Breast epithelium (tissue), 4 donors: ENCODE measurements at regions of chr6 and their contacts with region 1.

Region 1: DNA sequence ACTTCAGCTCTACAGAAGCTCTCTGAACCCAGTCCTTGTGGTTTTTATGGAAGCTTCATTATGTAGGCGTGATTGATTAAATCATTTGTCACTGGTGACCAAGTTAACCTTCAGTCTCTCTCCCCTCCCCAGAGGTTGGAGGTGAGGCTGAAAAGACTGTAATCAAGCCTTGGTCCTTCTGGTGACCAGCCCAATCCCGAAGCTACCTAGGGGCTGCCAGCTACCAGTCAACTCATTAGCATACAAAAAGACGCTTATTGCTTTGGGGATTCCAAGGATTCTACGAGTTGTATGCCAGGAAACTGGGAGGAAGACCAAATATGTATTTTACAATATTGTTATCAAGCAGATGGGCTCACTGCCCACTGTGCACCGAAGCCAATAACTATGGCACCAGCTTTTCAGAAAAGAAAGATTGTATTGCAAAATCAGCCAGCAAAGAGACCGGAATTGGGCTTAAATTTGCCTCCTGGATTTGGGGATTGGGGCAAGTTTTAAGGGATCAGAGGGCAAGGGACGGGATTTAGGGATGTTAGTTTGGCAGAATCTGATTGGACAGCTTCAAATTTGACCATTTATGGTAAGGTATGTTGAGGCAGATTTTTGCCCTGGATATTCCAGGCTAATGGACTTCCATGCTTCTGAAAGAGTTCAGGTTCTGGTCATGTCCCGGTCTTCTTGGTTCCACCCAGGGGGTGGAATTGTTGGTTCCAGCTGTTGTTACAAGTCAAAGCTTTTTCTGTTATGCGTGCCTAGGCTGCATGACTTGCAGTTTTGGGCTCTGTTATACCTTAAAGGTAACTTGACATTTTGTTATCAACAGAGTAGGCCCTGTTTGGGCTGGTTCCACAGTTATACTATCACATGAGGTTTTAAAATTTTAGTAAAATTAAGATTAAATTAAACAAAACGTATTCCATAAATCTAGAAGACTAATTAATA is 167.4 kb downstream of the COL9A1 start:
- DNase-seq: no peak
- H3K4me3 ChIP-seq: no peak overlapping the region
- H3K27ac ChIP-seq: no peak overlapping the region
- H3K4me1 ChIP-seq: no peaks in the 10 kb centered on the region
- H3K27me3 ChIP-seq: no peaks in the 10 kb centered on the region
- CTCF ChIP-seq: no peak
- POLR2A ChIP-seq: no peak

Region 2: GRCh38 chr6:70210462-70210861 is 75.0 kb after region 1 on chr6:
- intact Hi-C with region 1: no loop called
- DNase-seq: no peak
- H3K4me3 ChIP-seq: no peak overlapping the region
- H3K27ac ChIP-seq: no peak overlapping the region
- H3K4me1 ChIP-seq: no peaks in the 10 kb centered on the region
- H3K27me3 ChIP-seq: no peaks in the 10 kb centered on the region
- CTCF ChIP-seq: peak in 1 of 3 donors; percentile 9
- POLR2A ChIP-seq: no peak

Region 3: DNA sequence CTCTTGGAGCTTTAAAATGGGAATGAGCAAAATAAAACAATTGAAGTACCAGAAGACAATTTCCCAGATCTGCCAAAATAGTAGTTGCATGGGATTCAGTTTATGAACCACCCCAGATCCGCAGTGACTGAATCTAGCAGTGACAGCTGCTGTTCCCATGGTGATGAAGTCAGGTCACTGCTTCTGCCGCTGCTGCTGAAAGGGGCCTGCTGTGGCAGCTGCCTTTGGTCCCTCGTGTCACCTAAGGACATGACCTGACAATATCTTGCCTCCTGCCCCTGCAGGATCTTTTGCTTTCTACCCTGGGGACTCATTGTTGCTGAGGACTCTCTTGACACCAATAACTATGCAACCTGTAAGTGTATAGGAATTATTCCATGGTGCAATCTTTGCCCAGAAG is 1118.8 kb after region 1 on chr6:
- intact Hi-C with region 1: no loop called
- DNase-seq: no peak
- H3K4me3 ChIP-seq: no peak overlapping the region
- H3K27ac ChIP-seq: no peak overlapping the region
- H3K4me1 ChIP-seq: peaks cover 5 to 7% of the 10 kb centered on the region in 2 donors
- H3K27me3 ChIP-seq: no peaks in the 10 kb centered on the region
- CTCF ChIP-seq: no peak
- POLR2A ChIP-seq: no peak

Region 4: DNA sequence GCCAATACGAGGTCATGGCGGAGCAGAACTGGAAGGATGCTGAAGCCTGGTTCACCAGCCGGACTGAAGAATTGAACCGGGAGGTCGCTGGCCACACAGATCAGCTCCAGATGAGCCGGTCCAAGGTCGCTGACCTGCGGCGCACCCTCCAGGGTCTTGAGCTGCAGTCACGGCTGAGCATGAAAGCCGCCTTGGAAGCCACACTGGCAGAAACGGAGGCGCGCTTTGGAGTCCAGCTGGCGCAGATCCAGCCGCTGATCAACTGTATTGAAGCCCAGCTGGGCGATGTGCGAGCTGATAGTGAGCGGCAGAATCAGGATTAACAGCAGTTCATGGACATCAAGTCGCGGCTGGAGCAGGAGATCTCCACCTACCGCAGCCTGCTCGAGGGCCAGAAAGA is 1450.0 kb after region 1 on chr6:
- intact Hi-C with region 1: loop called (anchors 5 kb)
- DNase-seq: no peak
- H3K4me3 ChIP-seq: no peak overlapping the region
- H3K27ac ChIP-seq: no peak overlapping the region
- H3K4me1 ChIP-seq: no peaks in the 10 kb centered on the region
- H3K27me3 ChIP-seq: no peaks in the 10 kb centered on the region
- CTCF ChIP-seq: no peak
- POLR2A ChIP-seq: no peak